Mammary epithelial cell (primary cell): ENCODE measurements at regions of chr2 and their contacts with region 1.

Region 1: DNA sequence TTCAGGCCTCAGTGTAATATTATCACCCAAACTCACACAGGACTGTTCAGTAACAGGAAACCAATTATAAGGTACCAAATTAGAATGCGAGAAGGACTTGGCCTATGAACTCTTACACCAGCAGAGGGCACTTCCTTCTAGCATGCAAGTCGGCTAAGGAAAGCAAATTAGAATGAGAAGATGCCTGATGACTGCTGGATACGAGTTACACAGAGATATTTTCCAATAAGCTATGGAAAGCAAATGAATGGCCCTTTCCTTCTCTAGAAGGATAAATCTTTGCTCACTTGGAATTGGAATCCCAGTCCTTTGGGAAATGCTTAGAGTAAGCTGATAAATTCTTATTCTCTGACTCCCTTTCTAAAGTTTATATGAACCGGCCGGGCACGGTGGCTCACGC is 109.8 kb downstream of the AP1S3 start:
- DNase-seq: peak; percentile 62
- H3K4me3 ChIP-seq: no peak overlapping the region
- H3K27ac ChIP-seq: no peak overlapping the region
- H3K4me1 ChIP-seq: peaks cover 21% of the 10 kb centered on the region
- H3K27me3 ChIP-seq: no peaks in the 10 kb centered on the region
- CTCF ChIP-seq: peak; percentile 57 to 80

Region 2: GRCh38 chr2:223744573-223744972 is 17.0 kb after region 1 on chr2:
- CTCF ChIA-PET with region 1: no interaction called
- dilution Hi-C with region 1: no loop called
- in situ Hi-C with region 1: no loop called
- intact Hi-C with region 1: no loop called
- DNase-seq: no peak
- H3K4me3 ChIP-seq: no peak overlapping the region
- H3K27ac ChIP-seq: no peak overlapping the region
- H3K4me1 ChIP-seq: peaks cover 5% of the 10 kb centered on the region
- H3K27me3 ChIP-seq: no peaks in the 10 kb centered on the region
- CTCF ChIP-seq: no peak

Region 3: GRCh38 chr2:223760838-223761502 is 33.4 kb after region 1 on chr2:
- CTCF ChIA-PET with region 1: no interaction called
- dilution Hi-C with region 1: no loop called
- in situ Hi-C with region 1: no loop called
- intact Hi-C with region 1: loop called (anchors 1 kb)
- DNase-seq: peak; percentile 98
- H3K4me3 ChIP-seq: peak overlapping the region in 1 of 3 experiments; percentile 2
- H3K27ac ChIP-seq: peak overlapping the region; percentile 95
- H3K4me1 ChIP-seq: peaks cover 36% of the 10 kb centered on the region
- H3K27me3 ChIP-seq: no peaks in the 10 kb centered on the region
- CTCF ChIP-seq: peak; percentile 39 to 43

Region 4: DNA sequence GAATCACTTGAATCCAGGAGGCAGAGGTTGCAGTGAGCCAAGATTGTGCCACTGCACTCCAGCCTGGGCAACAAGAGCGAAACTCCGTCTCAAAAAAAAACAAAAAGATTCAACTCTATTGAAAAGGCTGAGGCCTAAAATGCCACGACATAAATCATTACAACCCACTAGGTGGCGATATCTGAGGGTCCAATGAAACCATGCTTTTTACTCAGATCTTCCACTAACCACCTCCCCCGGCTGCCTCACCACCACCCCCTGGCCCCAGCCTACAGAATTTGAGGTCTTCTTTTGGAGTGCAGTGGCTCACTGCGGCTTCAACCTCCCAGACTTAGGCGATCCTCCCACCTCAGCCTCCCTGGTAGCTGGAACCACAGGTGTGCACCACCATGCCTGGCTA is 52.3 kb after region 1 on chr2:
- CTCF ChIA-PET with region 1: no interaction called
- dilution Hi-C with region 1: no loop called
- in situ Hi-C with region 1: no loop called
- intact Hi-C with region 1: loop called (anchors 5 kb)
- DNase-seq: peak; percentile 44
- H3K4me3 ChIP-seq: no peak overlapping the region
- H3K27ac ChIP-seq: no peak overlapping the region
- H3K4me1 ChIP-seq: peaks cover 8% of the 10 kb centered on the region
- H3K27me3 ChIP-seq: no peaks in the 10 kb centered on the region
- CTCF ChIP-seq: peak; percentile 35 to 40

Region 5: DNA sequence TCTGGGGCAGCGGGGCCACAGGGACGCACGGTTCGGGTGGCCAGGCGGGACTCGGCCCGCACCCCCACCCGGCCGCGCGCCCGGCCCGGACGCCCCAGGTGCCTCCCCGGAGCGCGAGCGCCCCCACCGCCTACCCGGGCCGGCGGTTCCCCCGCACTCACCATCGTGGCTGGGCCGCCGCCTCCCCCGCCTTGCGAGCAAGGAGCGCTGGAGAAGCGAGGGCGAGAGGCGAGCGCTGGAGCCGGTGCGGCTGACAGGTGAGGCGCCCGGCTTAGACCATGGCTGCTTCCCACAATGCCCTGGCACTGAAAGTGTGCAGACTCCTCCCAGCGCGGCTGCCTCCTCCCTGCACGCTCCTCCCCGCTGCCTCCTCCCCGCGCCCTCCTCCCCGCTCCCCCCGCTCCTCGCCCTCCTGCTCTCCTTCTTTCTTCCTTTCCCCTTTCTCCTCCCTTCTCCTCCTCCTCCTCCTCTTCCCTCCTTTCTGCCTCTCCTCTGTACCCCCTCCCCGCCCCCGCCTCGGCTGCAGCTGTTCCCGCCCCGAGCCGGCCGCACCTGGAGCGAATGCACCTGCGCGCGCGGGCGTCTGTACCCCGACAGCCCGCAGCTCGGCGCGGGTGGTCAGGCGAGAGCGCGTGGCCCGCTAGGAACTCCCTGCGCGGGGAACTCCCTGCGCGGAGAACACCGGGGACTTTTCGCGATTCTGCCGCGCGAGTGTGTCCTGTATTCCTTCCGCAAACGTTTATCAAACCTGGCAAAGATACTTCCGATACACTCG is 109.9 kb after region 1 on chr2 and contains the start of gene AP1S3:
- CTCF ChIA-PET with region 1: no interaction called
- dilution Hi-C with region 1: no loop called
- in situ Hi-C with region 1: no loop called
- intact Hi-C with region 1: loop called (anchors 5 kb)
- DNase-seq: peak; percentile 87
- H3K4me3 ChIP-seq: peak within 1 kb of the TSS; percentile 76 to 92 (median 78)
- H3K27ac ChIP-seq: peak within 1 kb of the TSS; percentile 41
- H3K4me1 ChIP-seq: peaks cover 26% of the 10 kb centered on the region
- H3K27me3 ChIP-seq: no peaks in the 10 kb centered on the region
- CTCF ChIP-seq: no peak
- total RNA-seq, gene AP1S3: 32.0 to 41.1 TPM